ENCODE measurements at regions of chr11 and their contacts with region 1.

Region 1: DNA sequence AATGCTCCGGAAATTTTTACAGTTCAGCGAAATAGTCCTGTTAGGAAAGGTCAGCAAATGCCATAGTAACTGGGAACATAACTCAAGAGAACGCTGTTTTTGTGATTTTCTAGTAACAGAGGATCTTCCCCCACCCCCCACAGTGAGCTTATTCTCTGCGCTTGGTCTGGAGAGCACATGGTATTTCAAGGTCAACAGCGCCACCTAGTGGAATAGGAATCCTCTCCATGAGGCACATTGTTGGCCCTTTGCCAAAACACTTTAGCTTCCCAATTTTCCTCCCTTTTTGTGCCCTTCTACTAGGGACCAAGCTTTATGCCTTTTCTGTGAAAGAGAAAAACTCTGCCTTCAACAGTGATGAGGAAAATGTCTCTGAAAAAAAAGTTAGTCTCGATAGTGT is 13.2 kb upstream of the OR4C12 start:
- DNase-seq: peak; percentile 46
- ATAC-seq: peak; percentile 49; the same call in 1 of the 2 replicates
- H3K4me3 ChIP-seq: no peak overlapping the region
- H3K27ac ChIP-seq: no peak overlapping the region
- H3K4me1 ChIP-seq: no peaks in the 10 kb centered on the region
- H3K27me3 ChIP-seq: no peaks in the 10 kb centered on the region
- CTCF ChIP-seq: peak in 2 of 3 experiments; percentile 58 to 73; a peak in 4 of 6 replicates
- POLR2A ChIP-seq: no peak
- RAD21 ChIP-seq: peak; percentile 63

Region 2: DNA sequence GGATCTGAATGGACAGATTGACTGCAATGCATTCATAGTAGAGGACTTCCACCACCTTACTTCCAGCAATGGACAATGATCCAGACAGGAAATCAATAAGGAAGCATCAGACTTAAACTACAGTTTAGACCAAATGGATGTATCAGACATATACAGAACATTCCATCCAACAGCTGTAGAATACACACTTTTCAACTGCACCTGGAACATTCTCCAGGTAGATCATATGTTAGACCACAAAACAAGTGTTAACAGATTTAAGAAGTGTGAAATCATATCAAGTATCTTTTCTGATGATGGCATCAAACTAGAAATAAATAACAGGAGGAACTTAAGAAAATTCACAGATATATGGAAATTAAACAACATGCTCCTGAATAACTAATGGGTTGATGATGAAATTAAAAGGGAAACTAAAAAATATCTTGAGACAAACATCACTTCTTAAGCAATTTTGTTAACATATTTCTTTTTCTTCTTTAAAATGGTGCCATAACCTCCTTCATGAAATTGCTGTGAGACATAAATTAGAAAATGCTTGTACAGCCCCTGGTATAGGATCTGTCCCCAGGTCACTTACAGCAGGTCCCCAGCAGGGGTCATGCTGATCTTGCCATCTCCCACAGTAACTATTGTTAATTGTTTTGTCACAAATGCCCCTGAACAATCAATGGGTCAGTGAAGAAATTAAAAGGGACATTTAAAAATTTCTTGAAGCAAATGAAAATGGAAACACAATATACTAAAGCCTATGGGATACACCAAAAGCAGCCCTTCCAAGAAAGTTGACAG is 1878.9 kb before region 1 on chr11:
- CTCF ChIA-PET with region 1: interaction called, 4 read pairs
- POLR2A ChIA-PET with region 1: no interaction called
- RAD21 ChIA-PET with region 1: no interaction called
- intact Hi-C with region 1: loop called (anchors 10 kb)
- DNase-seq: no peak
- ATAC-seq: peak; percentile 85
- H3K4me3 ChIP-seq: no peak overlapping the region
- H3K27ac ChIP-seq: no peak overlapping the region
- H3K4me1 ChIP-seq: no peaks in the 10 kb centered on the region
- H3K27me3 ChIP-seq: no peaks in the 10 kb centered on the region
- CTCF ChIP-seq: peak; percentile 13 to 62 (median 58); a peak in 4 of 6 replicates
- POLR2A ChIP-seq: no peak
- RAD21 ChIP-seq: peak; percentile 16; the same call in 1 of the 2 replicates

Region 3: GRCh38 chr11:48172818-48173609 is 1822.6 kb before region 1 on chr11:
- CTCF ChIA-PET with region 1: interaction called, 3 read pairs
- POLR2A ChIA-PET with region 1: no interaction called
- RAD21 ChIA-PET with region 1: no interaction called
- intact Hi-C with region 1: loop called (anchors 2 kb)
- DNase-seq: peak; percentile 15
- ATAC-seq: peak; percentile 97
- H3K4me3 ChIP-seq: no peak overlapping the region
- H3K27ac ChIP-seq: no peak overlapping the region
- H3K4me1 ChIP-seq: no peaks in the 10 kb centered on the region
- H3K27me3 ChIP-seq: no peaks in the 10 kb centered on the region
- CTCF ChIP-seq: peak; percentile 27 to 99 (median 95); a peak in 5 of 6 replicates
- POLR2A ChIP-seq: no peak
- RAD21 ChIP-seq: peak; percentile 75

Region 4: DNA sequence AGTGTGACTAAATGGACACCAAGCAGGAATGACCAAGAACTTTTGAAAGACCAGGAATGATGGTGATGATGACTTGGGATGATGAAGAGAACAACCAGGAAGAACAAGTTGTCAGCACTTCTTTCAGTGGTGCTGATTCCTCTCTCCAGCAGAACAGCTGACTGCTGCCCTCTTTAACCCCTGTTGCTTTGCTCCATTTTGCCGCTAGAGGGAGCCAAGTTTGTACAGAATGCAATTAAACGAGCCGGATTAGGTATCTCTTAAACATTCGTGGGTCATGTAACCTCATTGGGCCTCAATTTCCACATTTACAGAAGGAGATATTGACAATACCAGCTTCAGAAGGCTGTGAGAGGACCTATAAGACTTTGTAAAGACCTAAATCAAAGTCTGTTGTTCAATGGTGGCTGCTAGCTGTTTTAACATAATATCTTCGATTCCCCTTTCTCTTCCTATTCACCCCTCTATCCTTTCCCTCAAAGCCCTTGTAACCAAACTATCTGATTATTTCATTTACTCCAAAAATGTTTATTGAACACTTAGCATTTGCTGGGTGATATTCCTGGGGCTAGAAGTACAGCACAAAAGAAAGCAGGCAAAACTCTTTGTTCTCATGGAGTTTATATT is 1687.7 kb before region 1 on chr11:
- CTCF ChIA-PET with region 1: interaction called, 6 read pairs
- POLR2A ChIA-PET with region 1: no interaction called
- RAD21 ChIA-PET with region 1: no interaction called
- intact Hi-C with region 1: loop called (anchors 5 kb)
- DNase-seq: peak; percentile 40
- ATAC-seq: peak; percentile 69
- H3K4me3 ChIP-seq: no peak overlapping the region
- H3K27ac ChIP-seq: no peak overlapping the region
- H3K4me1 ChIP-seq: no peaks in the 10 kb centered on the region
- H3K27me3 ChIP-seq: no peaks in the 10 kb centered on the region
- CTCF ChIP-seq: peak; percentile 25 to 94 (median 88); a peak in 5 of 6 replicates
- POLR2A ChIP-seq: no peak
- RAD21 ChIP-seq: peak; percentile 69